ENCODE measurements at regions of chr3 and their contacts with region 1.

Region 1: DNA sequence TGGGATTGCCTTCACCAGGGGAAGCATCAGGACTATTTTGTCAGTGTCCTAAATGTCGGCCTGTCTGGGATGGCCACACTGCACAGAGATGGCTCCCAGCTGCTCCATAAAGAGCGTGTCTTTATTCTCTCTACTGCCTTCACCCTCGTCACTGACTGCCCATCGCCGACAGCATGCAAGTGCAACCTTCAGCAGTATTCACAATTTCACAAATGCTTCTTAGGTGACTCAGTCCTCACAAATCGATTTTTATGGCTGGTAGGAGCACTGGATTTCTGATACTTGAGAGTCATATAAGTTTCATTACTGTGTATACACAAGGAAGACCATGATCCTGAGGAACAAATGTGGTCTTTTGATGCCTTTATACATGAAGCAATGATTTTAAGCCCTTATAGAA is 1.1 kb upstream of the SSUH2 start:
- DNase-seq: no peak
- H3K4me3 ChIP-seq: no peak overlapping the region
- H3K27ac ChIP-seq: no peak overlapping the region
- H3K4me1 ChIP-seq: no peaks in the 10 kb centered on the region
- H3K27me3 ChIP-seq: peaks cover 0 to 2% (median 0%) of the 10 kb centered on the region in 4 experiments; a peak in 2 of 7 replicates
- CTCF ChIP-seq: no peak
- EP300 ChIP-seq: no peak
- POLR2A ChIP-seq: no peak
- RAD21 ChIP-seq: no peak

Region 2: GRCh38 chr3:8635631-8636030 is 10.1 kb before region 1 on chr3:
- CTCF ChIA-PET with region 1: interaction called, 11 read pairs
- POLR2A ChIA-PET with region 1: interaction called, 3 read pairs
- DNase-seq: no peak
- H3K4me3 ChIP-seq: no peak overlapping the region
- H3K27ac ChIP-seq: no peak overlapping the region
- H3K4me1 ChIP-seq: peaks cover 0 to 3% (median 0%) of the 10 kb centered on the region in 4 experiments; a peak in 1 of 7 replicates
- H3K27me3 ChIP-seq: no peaks in the 10 kb centered on the region; a peak in 1 of 7 replicates
- CTCF ChIP-seq: peak; percentile 30 to 49 (median 41)
- EP300 ChIP-seq: no peak
- POLR2A ChIP-seq: no peak
- RAD21 ChIP-seq: peak; percentile 39 to 49

Region 3: DNA sequence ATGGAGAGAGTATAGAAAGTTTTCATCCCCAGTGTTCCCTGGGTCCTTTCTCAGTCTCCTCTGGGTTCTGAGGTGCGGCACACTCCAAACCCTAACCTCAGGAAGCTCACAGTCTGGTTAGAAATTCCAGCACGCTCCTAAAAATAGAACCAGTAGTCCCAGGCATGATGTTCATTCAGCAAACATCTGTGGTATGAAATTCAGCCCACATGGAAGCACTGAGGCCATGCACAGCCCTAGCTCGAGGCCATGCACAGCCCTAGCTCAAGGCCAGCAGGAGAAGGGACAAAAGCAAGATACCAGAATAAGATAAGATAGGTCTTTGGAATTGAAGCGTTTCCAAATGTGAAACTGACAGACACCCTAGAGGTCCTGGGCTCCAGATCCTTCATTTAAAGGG is 206.0 kb after region 1 on chr3:
- CTCF ChIA-PET with region 1: no interaction called
- POLR2A ChIA-PET with region 1: no interaction called
- DNase-seq: no peak
- H3K4me3 ChIP-seq: no peak overlapping the region
- H3K27ac ChIP-seq: no peak overlapping the region
- H3K4me1 ChIP-seq: no peaks in the 10 kb centered on the region
- H3K27me3 ChIP-seq: no peaks in the 10 kb centered on the region
- CTCF ChIP-seq: no peak
- EP300 ChIP-seq: no peak
- POLR2A ChIP-seq: no peak
- RAD21 ChIP-seq: no peak

Measured in H1 (cell line).